Activated CD4-positive, alpha-beta memory T cell treated with anti-CD3 and anti-CD28 coated beads, Interleukin-2, amount 10 ng/mL, durations not matched to agents 7 days and 5 days (primary cell): ENCODE measurements at regions of chr15 and their contacts with region 1.

Region 1: DNA sequence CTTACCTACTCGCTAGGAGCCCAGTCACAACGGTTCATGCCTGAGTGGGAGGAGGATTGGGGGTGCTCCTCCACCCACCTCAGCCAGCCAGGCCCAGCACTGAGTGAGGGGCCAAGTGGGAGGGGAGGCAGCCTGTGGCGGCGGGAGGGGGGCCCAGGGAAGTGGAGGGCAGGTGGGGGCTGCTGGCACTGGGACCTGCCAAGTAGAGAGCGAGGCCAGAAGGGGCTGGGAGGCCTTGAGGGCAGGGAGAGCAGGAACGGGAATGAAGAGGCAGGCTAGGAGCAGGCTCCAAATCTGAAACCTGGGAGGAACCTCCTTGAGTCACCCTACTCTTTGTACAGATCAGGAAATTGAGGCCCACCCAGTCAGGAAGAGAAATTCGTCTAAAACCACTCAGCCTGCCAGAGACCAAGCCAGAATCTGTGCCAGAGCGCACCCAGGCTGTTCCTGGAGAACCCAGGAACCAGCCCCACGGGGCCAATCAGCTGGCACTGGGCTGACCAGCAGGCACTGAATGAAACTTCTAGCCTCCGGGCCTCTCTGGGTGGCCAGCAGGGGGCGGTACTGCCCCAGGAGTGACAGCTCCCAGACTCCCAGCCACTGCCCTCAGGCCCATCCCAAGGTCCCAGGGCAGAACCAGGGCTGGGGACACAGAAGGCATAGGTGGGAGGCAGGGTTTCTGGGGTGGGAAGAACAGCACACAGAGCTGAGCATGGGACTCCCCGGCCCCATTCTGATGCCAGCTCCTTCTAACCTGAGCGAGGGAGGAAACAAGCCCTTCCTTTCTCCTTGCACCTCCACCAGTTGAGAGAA is 14.8 kb upstream of the CYP11A1 start:
- DNase-seq: peak; percentile 82
- H3K4me3 Mint-ChIP-seq: no peak overlapping the region
- H3K27ac Mint-ChIP-seq: no peak overlapping the region
- H3K4me1 Mint-ChIP-seq: peaks cover 51% of the 10 kb centered on the region
- H3K27me3 Mint-ChIP-seq: no peaks in the 10 kb centered on the region

Region 2: GRCh38 chr15:74322181-74323076 is 59.8 kb before region 1 on chr15:
- CTCF ChIA-PET with region 1: no interaction called
- POLR2A ChIA-PET with region 1: no interaction called
- DNase-seq: peak; percentile 67
- H3K4me3 Mint-ChIP-seq: no peak overlapping the region
- H3K27ac Mint-ChIP-seq: no peak overlapping the region
- H3K4me1 Mint-ChIP-seq: peaks cover 3% of the 10 kb centered on the region
- H3K27me3 Mint-ChIP-seq: peaks cover 2% of the 10 kb centered on the region

Region 3: GRCh38 chr15:74396445-74397238 is 14.4 kb after region 1 on chr15:
- CTCF ChIA-PET with region 1: interaction called, 61 read pairs
- POLR2A ChIA-PET with region 1: interaction called, 23 read pairs
- DNase-seq: no peak
- H3K4me3 Mint-ChIP-seq: no peak overlapping the region
- H3K27ac Mint-ChIP-seq: no peak overlapping the region
- H3K4me1 Mint-ChIP-seq: peaks cover 62% of the 10 kb centered on the region
- H3K27me3 Mint-ChIP-seq: no peaks in the 10 kb centered on the region

Region 4: DNA sequence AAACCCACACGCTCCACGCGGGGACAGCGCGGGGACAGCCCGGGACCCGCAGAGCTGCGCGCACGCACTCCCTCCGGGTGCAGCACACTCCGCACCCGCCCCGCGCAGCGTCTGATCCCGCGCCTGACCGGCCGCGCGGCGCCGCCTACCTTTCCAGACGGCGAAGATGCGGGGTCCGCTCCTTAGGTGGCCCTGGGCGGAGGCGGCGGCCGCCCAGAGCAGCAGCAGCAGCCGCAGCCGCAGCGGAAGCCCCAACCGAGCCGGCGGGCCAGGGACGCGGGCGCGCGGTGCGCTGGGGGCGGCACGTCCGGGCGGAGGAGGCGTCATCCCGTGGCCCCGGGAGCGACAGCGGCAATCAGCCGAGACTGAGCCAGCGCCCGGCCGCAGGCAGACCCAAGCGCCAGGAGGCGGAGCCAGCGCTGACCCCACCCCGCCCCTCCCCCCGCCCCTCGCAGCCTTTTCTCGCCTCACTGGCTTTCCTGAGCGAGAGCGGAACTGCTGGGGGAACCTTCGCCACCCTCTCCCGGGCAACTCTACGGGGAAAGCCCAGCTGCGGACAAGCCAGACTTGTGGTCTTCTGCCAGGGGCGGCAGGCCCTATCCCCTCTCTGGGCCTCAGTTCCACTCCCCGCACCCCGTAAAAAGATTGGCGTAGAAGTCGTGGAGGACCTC is 51.5 kb after region 1 on chr15 and contains the start of gene SEMA7A:
- CTCF ChIA-PET with region 1: interaction called, 248 read pairs
- POLR2A ChIA-PET with region 1: interaction called, 14 read pairs
- DNase-seq: peak; percentile 86
- H3K4me3 Mint-ChIP-seq: peak within 1 kb of the TSS; percentile 67
- H3K27ac Mint-ChIP-seq: peak within 1 kb of the TSS; percentile 33
- H3K4me1 Mint-ChIP-seq: peaks cover 35% of the 10 kb centered on the region
- H3K27me3 Mint-ChIP-seq: peaks cover 4% of the 10 kb centered on the region
- total RNA-seq, gene SEMA7A: 3.8 to 4.3 TPM

Region 5: GRCh38 chr15:74453925-74454763 is 71.9 kb after region 1 on chr15:
- CTCF ChIA-PET with region 1: interaction called, 19 read pairs
- POLR2A ChIA-PET with region 1: no interaction called
- DNase-seq: no peak
- H3K4me3 Mint-ChIP-seq: no peak overlapping the region
- H3K27ac Mint-ChIP-seq: peak overlapping the region; percentile 36
- H3K4me1 Mint-ChIP-seq: peaks cover 34% of the 10 kb centered on the region
- H3K27me3 Mint-ChIP-seq: no peaks in the 10 kb centered on the region

Region 6: DNA sequence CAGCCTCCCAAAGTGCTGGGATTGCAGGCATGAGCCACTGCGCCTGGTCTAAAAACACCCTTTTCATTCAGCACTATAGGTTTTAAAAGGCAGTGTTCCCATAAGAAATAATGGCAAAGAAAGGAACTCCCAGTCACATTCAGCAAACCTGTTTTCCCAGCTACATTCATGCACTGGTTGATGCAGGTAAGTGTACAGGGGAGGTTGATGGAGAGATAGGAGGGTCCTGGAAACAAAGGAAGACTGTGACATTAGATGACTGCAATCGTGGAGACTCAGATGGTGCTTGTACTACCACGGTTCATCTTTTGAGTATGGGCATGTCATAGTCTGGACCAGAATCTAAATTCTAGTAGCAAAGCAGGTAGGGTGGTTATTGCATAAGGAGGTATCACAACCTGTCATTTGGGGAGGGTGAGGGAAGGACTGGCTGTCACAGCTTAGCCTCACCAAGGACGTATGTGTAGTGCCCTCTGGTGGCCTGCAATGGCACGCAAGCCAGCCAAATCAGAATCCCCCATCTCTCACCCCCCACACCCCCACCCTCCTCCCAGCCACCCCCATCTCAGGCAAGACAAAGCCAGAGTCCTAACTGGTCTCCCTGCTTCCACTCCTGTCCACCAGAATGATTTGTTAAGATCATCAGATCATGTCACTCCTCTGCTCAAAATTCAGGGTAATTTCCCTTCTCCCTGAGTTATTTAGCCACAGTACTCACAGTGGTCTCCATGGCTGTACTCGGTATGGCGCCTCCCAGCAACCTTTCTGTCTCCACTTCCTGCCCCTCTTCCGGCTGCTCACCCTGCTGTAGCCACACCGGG is 107.5 kb after region 1 on chr15:
- CTCF ChIA-PET with region 1: interaction called, 15 read pairs
- POLR2A ChIA-PET with region 1: interaction called, 7 read pairs
- DNase-seq: peak; percentile 75
- H3K4me3 Mint-ChIP-seq: peak overlapping the region; percentile 16
- H3K27ac Mint-ChIP-seq: peak overlapping the region; percentile 64
- H3K4me1 Mint-ChIP-seq: peaks cover 23% of the 10 kb centered on the region
- H3K27me3 Mint-ChIP-seq: no peaks in the 10 kb centered on the region

Region 7: DNA sequence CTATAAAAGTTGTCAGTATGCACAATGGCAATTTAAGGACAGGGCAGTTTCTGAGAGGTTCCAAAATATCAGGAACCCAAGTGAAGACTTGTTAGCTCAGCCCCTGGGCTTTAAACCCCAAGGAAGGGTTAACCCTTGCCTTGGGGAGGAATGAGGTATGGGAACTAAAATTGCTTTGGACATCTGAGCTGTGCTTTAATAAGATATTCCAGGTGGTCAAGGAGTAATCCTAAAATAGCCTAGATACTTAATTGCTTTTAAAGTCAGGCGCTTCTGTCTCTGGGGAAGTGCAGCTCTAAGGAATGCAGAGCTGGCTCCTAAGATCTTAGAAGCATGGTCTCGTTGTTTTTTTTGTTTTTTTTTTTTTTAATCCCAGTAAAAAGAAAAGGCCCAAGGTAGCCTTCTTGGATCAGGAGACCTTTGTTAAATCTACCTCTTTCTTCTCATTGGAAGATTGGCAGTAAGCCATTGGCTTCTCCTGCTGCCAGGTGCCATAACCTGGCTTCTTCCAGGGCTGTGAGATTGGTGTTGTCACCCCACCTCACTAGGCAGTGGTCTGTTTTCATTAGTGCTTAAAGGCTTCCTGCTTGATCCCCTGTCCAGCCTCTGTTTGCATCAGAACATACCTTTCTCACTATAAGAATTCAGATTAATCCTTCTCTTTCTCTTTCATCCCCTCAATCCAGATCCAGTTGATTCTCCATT is 183.3 kb after region 1 on chr15:
- CTCF ChIA-PET with region 1: no interaction called
- POLR2A ChIA-PET with region 1: no interaction called
- DNase-seq: no peak
- H3K4me3 Mint-ChIP-seq: no peak overlapping the region
- H3K27ac Mint-ChIP-seq: no peak overlapping the region
- H3K4me1 Mint-ChIP-seq: peaks cover 40% of the 10 kb centered on the region
- H3K27me3 Mint-ChIP-seq: no peaks in the 10 kb centered on the region